ENCODE measurements at regions of chr9 and their contacts with region 1.

Region 1: DNA sequence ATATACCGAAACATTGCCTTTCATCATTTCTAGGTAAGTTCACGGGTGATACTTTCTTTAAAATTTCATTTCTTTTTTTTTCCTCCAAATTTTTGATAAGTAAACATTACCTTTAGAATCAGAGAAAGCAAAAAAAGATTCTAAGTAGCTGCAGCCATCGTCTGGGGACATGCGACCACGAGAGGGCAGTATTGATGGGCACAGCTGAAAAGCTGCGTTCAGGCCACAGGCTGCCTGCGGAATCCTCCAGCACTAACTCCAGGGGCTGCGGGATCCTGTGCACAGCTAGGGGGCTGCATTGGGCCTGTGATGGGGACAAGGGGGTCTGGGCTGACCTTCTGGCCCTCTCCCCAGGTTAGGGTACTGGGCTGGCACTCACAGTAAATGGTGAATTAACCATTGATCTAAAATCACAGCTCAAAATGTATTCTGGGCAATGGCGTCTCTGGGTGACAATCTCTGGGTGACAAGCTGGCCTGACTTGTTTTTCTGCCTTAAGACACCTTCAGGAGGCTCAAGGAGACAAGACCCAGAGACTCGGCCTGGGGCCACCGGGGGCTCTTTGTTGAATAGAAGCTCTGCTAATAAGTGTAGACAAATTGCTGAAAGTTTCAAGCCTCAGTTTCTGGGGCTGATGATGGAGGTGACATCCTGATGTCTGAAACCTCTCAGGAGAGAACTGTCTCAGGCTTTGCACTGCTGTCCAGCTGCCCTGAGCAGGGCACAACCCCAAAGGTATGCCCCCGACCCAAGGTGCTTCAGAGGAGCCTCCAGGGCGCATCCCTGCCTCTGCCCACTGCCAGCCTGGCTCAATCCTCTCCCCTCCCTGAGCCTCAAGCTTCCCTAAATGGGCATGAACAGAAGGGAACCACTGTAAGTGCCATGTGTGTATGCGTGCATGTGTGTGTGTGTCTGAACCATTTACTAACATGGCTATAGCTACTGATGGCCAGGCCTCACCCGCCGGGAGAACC is 44.3 kb upstream of the SARDH start:
- DNase-seq: peak; percentile 83
- CTCF ChIP-seq: peak; percentile 88

Region 2: DNA sequence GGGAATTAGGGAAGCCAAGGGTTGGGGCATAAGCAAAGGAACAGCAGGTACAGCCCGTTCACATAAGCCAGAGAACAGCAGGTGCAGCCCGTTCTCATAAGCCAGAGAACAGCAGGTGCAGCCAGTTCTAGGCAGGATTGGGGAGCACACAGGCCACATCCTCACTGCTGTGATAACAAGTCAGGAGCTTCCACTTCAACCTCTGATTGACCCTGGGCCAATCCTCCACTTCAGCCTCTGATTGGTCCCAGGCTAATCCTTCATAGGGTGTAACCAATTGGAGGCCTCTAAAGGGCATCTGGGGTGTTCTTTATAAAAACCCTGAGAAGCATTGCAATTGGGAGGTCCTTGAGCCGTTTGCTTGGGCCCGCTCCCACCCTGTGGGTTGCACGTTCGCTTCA is 693.2 kb before region 1 on chr9:
- in situ Hi-C with region 1: no loop called
- DNase-seq: no peak
- CTCF ChIP-seq: no peak

Region 3: DNA sequence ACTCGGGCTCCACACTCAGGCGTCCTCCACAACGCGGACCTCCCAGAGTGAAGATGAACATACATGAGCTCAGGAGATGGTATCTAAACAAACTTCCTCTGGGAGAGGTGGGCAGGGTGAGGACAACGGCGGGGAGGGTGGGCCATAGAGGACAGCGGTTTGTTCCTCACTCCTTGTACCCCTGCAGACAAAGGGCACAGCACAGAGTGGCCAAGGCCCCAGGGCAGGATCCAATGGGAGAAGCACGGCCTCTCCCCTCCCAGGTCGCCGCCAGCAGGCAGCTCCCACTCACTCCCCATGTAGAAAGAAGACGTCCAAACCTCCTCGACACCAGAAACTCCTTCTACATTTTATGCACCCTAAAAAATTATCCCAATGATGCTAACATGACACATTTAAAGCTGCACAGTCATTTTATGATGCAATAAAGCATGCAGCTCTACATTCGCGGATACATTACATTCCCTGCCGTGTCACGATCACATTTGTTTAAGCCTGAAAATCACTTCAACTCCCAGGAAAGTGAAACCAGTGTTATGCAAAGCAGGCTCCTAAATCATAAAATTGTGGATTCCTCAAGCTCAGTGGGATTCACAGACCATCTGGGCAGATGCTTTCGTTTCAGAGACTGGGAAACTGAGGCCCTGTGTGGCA is 43.2 kb after region 1 on chr9:
- in situ Hi-C with region 1: no loop called
- DNase-seq: no peak
- CTCF ChIP-seq: no peak

Region 4: GRCh38 chr9:133992780-133993634 is 210.6 kb after region 1 on chr9:
- in situ Hi-C with region 1: loop called (anchors 10 kb)
- DNase-seq: peak; percentile 92
- CTCF ChIP-seq: peak; percentile 67

Measured in GM13977 (cell line).